IMR-90 (cell line): ENCODE measurements at regions of chr14 and their contacts with region 1.

Region 1: GRCh38 chr14:94345337-94346064 is 22.4 kb upstream of the SERPINA6 start:
- DNase-seq: peak; percentile 93
- ATAC-seq: peak; percentile 61
- H3K4me3 ChIP-seq: no peak overlapping the region
- H3K27ac ChIP-seq: no peak overlapping the region
- H3K4me1 ChIP-seq: peaks cover 8% of the 10 kb centered on the region
- H3K27me3 ChIP-seq: peaks cover 3% of the 10 kb centered on the region
- CTCF ChIP-seq: 0 out of 2 replicates have a peak, but pooled peaks have one; percentile 4
- POLR2A ChIP-seq: no peak
- RAD21 ChIP-seq: no peak

Region 2: DNA sequence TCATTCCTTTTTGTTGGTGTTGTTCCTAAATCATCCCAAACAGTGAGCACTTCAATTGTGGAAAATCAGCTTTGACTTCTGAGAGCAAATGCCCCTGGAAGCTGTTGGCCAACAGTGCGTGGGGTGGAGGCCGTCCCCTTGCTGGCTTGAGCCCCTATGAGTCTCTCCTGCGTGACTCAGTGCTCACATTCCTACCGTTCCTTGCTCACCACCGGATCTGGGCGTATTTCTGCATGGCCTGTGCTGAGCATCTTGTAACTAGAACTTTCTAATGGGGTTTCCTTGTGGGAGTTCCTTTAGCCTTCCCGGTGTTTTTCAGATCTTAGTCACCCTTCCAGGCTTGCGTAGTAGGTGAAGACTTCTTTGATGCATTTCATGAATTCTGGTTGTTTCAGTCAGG is 28.2 kb after region 1 on chr14:
- CTCF ChIA-PET with region 1: interaction called, 3 read pairs
- POLR2A ChIA-PET with region 1: no interaction called
- dilution Hi-C with region 1: no loop called
- in situ Hi-C with region 1: no loop called
- intact Hi-C with region 1: loop called (anchors 2 kb)
- DNase-seq: peak; percentile 97
- ATAC-seq: peak; percentile 94
- H3K4me3 ChIP-seq: no peak overlapping the region
- H3K27ac ChIP-seq: peak overlapping the region; percentile 65; the same call in 1 of the 2 replicates
- H3K4me1 ChIP-seq: peaks cover 7% of the 10 kb centered on the region
- H3K27me3 ChIP-seq: no peaks in the 10 kb centered on the region
- CTCF ChIP-seq: no peak
- POLR2A ChIP-seq: no peak
- RAD21 ChIP-seq: no peak

Region 3: DNA sequence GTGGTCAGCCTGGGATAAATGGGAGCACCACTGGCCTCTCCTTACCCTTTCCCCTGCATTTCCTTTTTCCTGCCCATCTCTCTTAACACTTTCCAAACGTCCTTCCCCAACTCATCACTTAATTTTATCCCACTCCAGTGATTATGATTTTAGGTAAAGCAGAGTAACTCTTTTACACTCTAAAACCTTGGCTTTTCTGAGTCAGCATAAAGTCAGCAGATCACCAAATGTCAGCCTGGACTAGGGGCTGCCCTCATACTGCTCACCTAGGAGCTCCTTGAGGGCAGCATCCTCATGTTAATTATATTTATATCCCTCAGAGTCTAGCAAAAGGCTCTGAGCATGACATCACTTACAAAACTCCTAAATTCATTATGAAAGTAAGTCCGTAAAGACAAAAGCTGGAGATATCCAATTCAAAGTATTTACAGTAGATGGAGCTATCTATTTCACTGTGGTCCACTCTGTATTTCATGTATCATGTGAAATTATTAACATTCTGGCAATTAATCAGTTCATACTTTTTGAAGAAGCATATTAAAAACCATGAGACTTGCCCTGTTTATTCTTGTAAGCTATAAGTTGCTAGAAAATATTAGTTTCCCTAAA is 828.8 kb after region 1 on chr14:
- CTCF ChIA-PET with region 1: no interaction called
- POLR2A ChIA-PET with region 1: interaction called, 11 read pairs
- dilution Hi-C with region 1: no loop called
- in situ Hi-C with region 1: no loop called
- intact Hi-C with region 1: no loop called
- DNase-seq: peak; percentile 15
- ATAC-seq: peak; percentile 51; the same call in 1 of the 2 replicates
- H3K4me3 ChIP-seq: no peak overlapping the region
- H3K27ac ChIP-seq: no peak overlapping the region
- H3K4me1 ChIP-seq: no peaks in the 10 kb centered on the region
- H3K27me3 ChIP-seq: no peaks in the 10 kb centered on the region
- CTCF ChIP-seq: no peak
- POLR2A ChIP-seq: no peak
- RAD21 ChIP-seq: no peak